CD8-positive, alpha-beta T cell (primary cell): ENCODE measurements at regions of chr3 and their contacts with region 1.

Region 1: DNA sequence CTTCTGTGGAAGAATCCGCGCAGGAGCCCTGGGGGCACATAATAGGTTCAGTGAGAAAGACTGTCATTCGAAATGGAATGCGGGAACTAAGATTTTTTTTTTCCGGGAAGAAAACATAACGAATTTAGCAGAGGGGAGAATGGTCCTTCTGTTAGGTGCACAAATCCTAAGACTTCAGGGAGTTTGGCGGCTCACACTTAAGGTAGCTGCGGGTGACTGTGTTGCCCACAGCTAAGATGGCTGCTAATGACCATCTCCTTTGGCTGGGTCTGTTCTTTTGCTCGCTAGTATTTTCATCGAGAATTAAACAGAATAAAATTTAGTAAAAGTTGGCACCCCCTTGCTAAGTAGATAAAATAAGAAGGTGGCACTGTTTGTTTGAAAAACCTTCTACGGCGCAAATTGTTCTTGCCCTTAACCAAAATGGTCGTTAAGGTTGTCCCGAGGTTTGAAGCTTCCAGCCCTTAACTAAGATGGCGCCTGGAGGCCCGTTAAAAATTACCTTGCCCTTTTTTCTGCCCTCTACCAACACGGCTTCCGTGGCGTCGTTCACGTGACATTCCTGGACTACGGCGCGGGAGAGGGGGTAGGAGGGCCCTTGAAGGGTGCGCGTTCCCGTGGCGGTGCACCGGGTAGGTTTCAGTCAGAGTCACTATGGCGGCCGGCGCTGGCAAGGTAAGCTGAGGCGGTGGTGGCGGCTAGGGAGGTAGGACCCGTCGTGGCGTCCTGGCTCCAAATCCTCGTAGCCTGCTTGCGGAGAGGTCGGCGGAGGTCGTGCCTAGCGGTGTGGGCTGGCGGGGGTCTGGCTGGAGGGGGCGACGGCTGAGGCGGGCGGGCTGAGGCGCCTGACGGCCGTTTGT is at the start of gene SLMAP:
- DNase-seq: peak; percentile 93 to 98 (median 96)
- ATAC-seq: peak; percentile 92
- H3K4me3 ChIP-seq: peak within 1 kb of the TSS; percentile 69 to 80
- H3K4me3 Mint-ChIP-seq: peak within 1 kb of the TSS; percentile 97
- H3K27ac ChIP-seq: peak within 1 kb of the TSS; percentile 45 to 79
- H3K27ac Mint-ChIP-seq: peak within 1 kb of the TSS; percentile 95
- H3K4me1 ChIP-seq: peaks cover 34% of the 10 kb centered on the region
- H3K4me1 Mint-ChIP-seq: peaks cover 44% of the 10 kb centered on the region
- H3K27me3 ChIP-seq: no peaks in the 10 kb centered on the region
- H3K27me3 Mint-ChIP-seq: no peaks in the 10 kb centered on the region
- CTCF ChIP-seq: no peak
- total RNA-seq, gene SLMAP: 55.0 to 56.7 TPM

Region 2: GRCh38 chr3:57227204-57227929 is 528.5 kb before region 1 on chr3 and contains the start of gene APPL1:
- CTCF ChIA-PET with region 1: no interaction called
- POLR2A ChIA-PET with region 1: no interaction called
- intact Hi-C with region 1: loop called (anchors 5 kb)
- DNase-seq: peak; percentile 68 to 93 (median 87)
- ATAC-seq: peak; percentile 89
- H3K4me3 ChIP-seq: peak within 1 kb of the TSS; percentile 82 to 91
- H3K4me3 Mint-ChIP-seq: peak within 1 kb of the TSS; percentile 93
- H3K27ac ChIP-seq: peak within 1 kb of the TSS; percentile 48 to 68
- H3K27ac Mint-ChIP-seq: peak within 1 kb of the TSS; percentile 89
- H3K4me1 ChIP-seq: peaks cover 11% of the 10 kb centered on the region
- H3K4me1 Mint-ChIP-seq: peaks cover 30% of the 10 kb centered on the region
- H3K27me3 ChIP-seq: no peaks in the 10 kb centered on the region
- H3K27me3 Mint-ChIP-seq: no peaks in the 10 kb centered on the region
- CTCF ChIP-seq: no peak
- total RNA-seq, gene APPL1: 19.3 to 23.4 TPM

Region 3: DNA sequence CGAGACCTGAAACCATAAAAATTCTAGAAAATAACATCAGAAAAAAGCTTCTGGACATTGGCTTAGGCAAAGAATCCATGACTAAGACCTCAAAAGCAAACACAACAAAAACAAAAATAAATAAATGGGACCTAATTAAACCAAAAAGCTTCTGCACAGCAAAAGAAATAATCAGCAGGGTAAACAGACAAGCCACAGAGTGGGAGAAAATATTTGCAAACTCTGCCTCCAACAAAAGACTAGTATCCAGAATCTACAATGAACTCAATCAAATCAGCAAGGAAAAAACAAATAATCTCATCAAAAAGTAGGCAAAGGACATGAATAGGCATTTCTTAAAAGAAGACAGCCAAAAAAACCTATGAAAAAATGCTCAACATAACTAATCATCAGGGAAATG is 271.3 kb before region 1 on chr3:
- CTCF ChIA-PET with region 1: no interaction called
- POLR2A ChIA-PET with region 1: no interaction called
- intact Hi-C with region 1: no loop called
- DNase-seq: no peak
- ATAC-seq: no peak
- H3K4me3 ChIP-seq: no peak overlapping the region
- H3K4me3 Mint-ChIP-seq: no peak overlapping the region
- H3K27ac ChIP-seq: no peak overlapping the region
- H3K27ac Mint-ChIP-seq: no peak overlapping the region
- H3K4me1 ChIP-seq: no peaks in the 10 kb centered on the region
- H3K4me1 Mint-ChIP-seq: no peaks in the 10 kb centered on the region
- H3K27me3 ChIP-seq: no peaks in the 10 kb centered on the region
- H3K27me3 Mint-ChIP-seq: no peaks in the 10 kb centered on the region
- CTCF ChIP-seq: no peak

Region 4: GRCh38 chr3:57673156-57673555 is 82.7 kb before region 1 on chr3:
- CTCF ChIA-PET with region 1: no interaction called
- POLR2A ChIA-PET with region 1: interaction called, 4 read pairs
- intact Hi-C with region 1: loop called in 1 of 2 experiments (anchors 5 kb)
- DNase-seq: no peak
- ATAC-seq: no peak
- H3K4me3 ChIP-seq: no peak overlapping the region
- H3K4me3 Mint-ChIP-seq: no peak overlapping the region
- H3K27ac ChIP-seq: no peak overlapping the region
- H3K27ac Mint-ChIP-seq: peak overlapping the region; percentile 55
- H3K4me1 ChIP-seq: peaks cover 20% of the 10 kb centered on the region
- H3K4me1 Mint-ChIP-seq: peaks cover 50% of the 10 kb centered on the region
- H3K27me3 ChIP-seq: no peaks in the 10 kb centered on the region
- H3K27me3 Mint-ChIP-seq: no peaks in the 10 kb centered on the region
- CTCF ChIP-seq: no peak

Region 5: GRCh38 chr3:57803647-57804081 is 47.8 kb after region 1 on chr3:
- CTCF ChIA-PET with region 1: no interaction called
- POLR2A ChIA-PET with region 1: no interaction called
- intact Hi-C with region 1: loop called in 1 of 2 experiments (anchors 5 kb)
- DNase-seq: peak in 1 of 9 experiments; percentile 30
- ATAC-seq: peak; percentile 76
- H3K4me3 ChIP-seq: no peak overlapping the region
- H3K4me3 Mint-ChIP-seq: peak overlapping the region; percentile 52
- H3K27ac ChIP-seq: peak overlapping the region in 1 of 2 experiments; percentile 59
- H3K27ac Mint-ChIP-seq: peak overlapping the region; percentile 84
- H3K4me1 ChIP-seq: peaks cover 27% of the 10 kb centered on the region
- H3K4me1 Mint-ChIP-seq: peaks cover 75% of the 10 kb centered on the region
- H3K27me3 ChIP-seq: no peaks in the 10 kb centered on the region
- H3K27me3 Mint-ChIP-seq: no peaks in the 10 kb centered on the region
- CTCF ChIP-seq: no peak

Region 6: GRCh38 chr3:58433400-58434169 is 677.7 kb after region 1 on chr3 and contains the start of gene PDHB:
- CTCF ChIA-PET with region 1: no interaction called
- POLR2A ChIA-PET with region 1: no interaction called
- intact Hi-C with region 1: loop called (anchors 2 to 10 kb)
- DNase-seq: peak; percentile 74 to 94 (median 88)
- ATAC-seq: peak; percentile 97
- H3K4me3 ChIP-seq: peak within 1 kb of the TSS; percentile 88 to 98
- H3K4me3 Mint-ChIP-seq: peak within 1 kb of the TSS; percentile 92
- H3K27ac ChIP-seq: peak within 1 kb of the TSS; percentile 86 to 87
- H3K27ac Mint-ChIP-seq: peak within 1 kb of the TSS; percentile 97
- H3K4me1 ChIP-seq: peaks cover 10% of the 10 kb centered on the region
- H3K4me1 Mint-ChIP-seq: peaks cover 25% of the 10 kb centered on the region
- H3K27me3 ChIP-seq: no peaks in the 10 kb centered on the region
- H3K27me3 Mint-ChIP-seq: no peaks in the 10 kb centered on the region
- CTCF ChIP-seq: no peak
- total RNA-seq, gene PDHB: 32.5 to 33.2 TPM

Region 7: GRCh38 chr3:58766587-58767282 is 1010.8 kb after region 1 on chr3:
- CTCF ChIA-PET with region 1: no interaction called
- POLR2A ChIA-PET with region 1: no interaction called
- intact Hi-C with region 1: no loop called
- DNase-seq: no peak
- ATAC-seq: no peak
- H3K4me3 ChIP-seq: no peak overlapping the region
- H3K4me3 Mint-ChIP-seq: no peak overlapping the region
- H3K27ac ChIP-seq: no peak overlapping the region
- H3K27ac Mint-ChIP-seq: no peak overlapping the region
- H3K4me1 ChIP-seq: no peaks in the 10 kb centered on the region
- H3K4me1 Mint-ChIP-seq: no peaks in the 10 kb centered on the region
- H3K27me3 ChIP-seq: no peaks in the 10 kb centered on the region
- H3K27me3 Mint-ChIP-seq: peaks cover 16% of the 10 kb centered on the region
- CTCF ChIP-seq: no peak